Gastrocnemius medialis (tissue), 4 donors: ENCODE measurements at regions of chr2 and their contacts with region 1.

Region 1: DNA sequence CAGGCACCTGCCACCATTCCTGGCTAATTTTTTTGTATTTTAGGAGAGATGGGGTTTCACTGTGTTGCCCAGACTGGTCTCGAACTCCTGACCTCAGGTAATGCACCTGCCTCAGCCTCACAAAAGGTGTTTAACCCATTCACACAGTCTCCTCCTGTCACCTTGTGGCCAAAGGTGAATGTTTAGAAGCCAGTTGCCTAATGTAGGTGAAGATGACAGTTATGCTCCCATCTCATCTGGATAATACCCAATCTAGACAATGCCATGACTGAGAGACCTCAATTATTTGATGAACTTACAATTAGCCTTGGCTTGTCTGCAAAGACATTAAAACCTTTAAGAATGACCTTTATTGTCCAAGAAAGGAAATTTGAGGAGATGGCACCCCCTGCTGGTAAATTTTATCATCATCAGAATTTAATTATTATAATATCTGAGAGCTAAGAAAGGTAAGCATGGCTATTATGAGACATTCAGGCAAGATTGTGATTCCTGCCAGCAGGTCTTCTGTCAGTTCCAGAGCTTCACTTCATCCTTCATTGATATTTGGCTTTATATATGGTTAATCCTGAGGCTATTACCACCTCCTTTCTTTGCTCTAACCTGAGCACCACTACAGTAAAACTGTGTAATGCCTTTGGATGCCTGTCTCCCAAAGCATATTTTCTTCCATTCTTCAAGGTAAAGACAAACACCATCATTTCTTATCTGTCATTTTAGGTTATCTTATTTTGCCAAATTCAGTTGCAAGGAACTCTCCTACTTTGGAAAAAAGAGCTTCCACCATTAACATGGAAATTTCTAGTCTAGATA is 117.6 kb downstream of the FAM124B start:
- DNase-seq: no peak
- ATAC-seq: no peak
- H3K4me3 ChIP-seq: no peak overlapping the region
- H3K27ac ChIP-seq: no peak overlapping the region
- H3K4me1 ChIP-seq: no peaks in the 10 kb centered on the region
- H3K27me3 ChIP-seq: peaks cover 0 to 5% (median 0%) of the 10 kb centered on the region in 3 donors
- CTCF ChIP-seq: peak; percentile 54 to 61 (median 56)
- POLR2A ChIP-seq: no peak

Region 2: DNA sequence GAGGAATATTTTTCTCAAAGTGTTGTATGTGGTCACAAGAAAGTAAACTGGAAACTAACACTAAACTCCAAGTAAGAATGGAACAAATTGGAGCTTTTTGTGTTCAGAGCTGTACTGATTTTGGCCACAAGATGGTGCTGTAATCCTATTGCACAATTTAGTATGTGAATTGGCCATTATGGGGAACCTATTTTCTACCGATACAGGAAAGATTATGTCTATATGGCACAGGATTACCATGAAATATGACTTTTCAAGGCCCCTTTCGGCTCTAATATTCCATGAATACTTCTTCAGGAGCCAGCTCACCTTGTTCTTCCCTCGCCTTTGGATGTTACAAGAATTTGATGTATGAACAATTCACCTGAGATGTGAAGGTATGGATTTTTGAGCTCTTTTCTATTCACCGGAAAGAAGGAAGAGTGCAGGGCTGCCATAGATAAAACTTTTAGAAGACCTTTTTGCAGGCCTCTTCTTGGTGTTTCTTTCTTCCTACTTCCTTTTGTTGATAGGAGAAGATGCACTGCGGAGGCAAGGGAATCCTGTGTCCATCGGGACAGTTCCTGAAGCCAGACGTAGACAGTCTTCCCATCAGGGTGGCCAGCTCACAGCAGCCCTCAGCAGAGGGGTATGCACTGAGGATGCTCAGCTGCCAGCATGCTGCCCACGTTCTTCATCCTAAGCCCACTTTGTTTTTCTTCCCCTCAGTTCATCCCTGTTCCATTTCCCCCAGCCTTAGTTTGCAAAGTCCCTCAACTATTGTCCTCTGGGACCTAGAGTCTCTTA is 313.8 kb before region 1 on chr2:
- in situ Hi-C with region 1: no loop called
- intact Hi-C with region 1: loop called (anchors 1 kb)
- DNase-seq: no peak
- ATAC-seq: peak in 1 of 2 donors; percentile 53
- H3K4me3 ChIP-seq: no peak overlapping the region
- H3K27ac ChIP-seq: no peak overlapping the region
- H3K4me1 ChIP-seq: no peaks in the 10 kb centered on the region
- H3K27me3 ChIP-seq: no peaks in the 10 kb centered on the region
- CTCF ChIP-seq: peak; percentile 59 to 91 (median 81)
- POLR2A ChIP-seq: no peak

Region 3: GRCh38 chr2:224268441-224268840 is 15.9 kb before region 1 on chr2:
- in situ Hi-C with region 1: no loop called
- intact Hi-C with region 1: no loop called
- DNase-seq: no peak
- ATAC-seq: no peak
- H3K4me3 ChIP-seq: no peak overlapping the region
- H3K27ac ChIP-seq: no peak overlapping the region
- H3K4me1 ChIP-seq: no peaks in the 10 kb centered on the region
- H3K27me3 ChIP-seq: no peaks in the 10 kb centered on the region
- CTCF ChIP-seq: no peak
- POLR2A ChIP-seq: no peak

Region 4: GRCh38 chr2:224630659-224631550 is 346.6 kb after region 1 on chr2:
- in situ Hi-C with region 1: no loop called
- intact Hi-C with region 1: no loop called
- DNase-seq: no peak
- ATAC-seq: no peak
- H3K4me3 ChIP-seq: no peak overlapping the region
- H3K27ac ChIP-seq: no peak overlapping the region
- H3K4me1 ChIP-seq: no peaks in the 10 kb centered on the region
- H3K27me3 ChIP-seq: no peaks in the 10 kb centered on the region
- CTCF ChIP-seq: no peak
- POLR2A ChIP-seq: no peak